Heart left ventricle (tissue), 16 donors: ENCODE measurements at regions of chr11 and their contacts with region 1.

Region 1: DNA sequence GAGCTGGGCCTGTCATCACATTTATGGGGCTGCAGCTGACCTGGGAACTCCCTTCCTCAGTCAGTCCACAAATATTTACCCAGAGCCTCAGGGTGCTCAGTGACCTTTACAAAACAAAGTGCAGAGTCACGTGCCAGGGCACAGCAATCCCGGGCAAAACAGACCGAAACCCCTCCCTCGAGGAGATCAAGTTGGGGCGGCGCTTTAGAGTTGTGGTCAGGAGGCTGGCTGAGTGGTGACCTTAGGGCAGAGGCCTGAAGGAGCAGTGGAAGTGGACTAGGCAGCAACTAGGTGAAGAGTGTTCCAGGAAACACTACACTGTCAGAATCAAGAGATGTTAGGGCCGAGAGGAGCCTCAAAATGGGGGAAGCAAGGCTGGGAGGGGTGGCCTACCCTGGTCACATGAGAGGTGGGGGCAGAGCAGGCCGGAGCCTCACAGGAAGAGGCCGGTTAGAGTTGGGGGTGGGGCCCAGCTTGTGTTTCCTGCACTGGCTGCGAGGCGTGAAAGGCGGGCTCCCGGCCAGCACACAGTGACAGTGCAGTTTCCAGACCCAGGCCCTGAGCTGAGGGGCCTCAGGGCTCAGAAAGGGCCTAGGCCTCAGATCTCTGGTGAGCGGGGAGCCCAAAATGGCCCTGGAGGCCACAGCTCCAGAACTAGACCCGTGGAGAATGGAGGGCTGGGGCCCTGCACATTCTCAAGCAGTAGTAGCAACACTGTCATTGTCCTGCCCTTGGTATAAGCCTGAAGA is 3.7 kb upstream of the NEAT1 start:
- DNase-seq: peak; percentile 98 to 99 (median 99)
- ATAC-seq: peak; percentile 41 to 59 (median 58)
- H3K4me3 ChIP-seq: peak overlapping the region; percentile 6 to 96 (median 82)
- H3K27ac ChIP-seq: peak overlapping the region; percentile 98 to 100 (median 100)
- H3K4me1 ChIP-seq: peaks cover 11 to 68% (median 55%) of the 10 kb centered on the region in 12 donors
- H3K27me3 ChIP-seq: no peaks in the 10 kb centered on the region
- CTCF ChIP-seq: no peak
- POLR2A ChIP-seq: peak in 1 of 2 donors; percentile 54

Region 2: DNA sequence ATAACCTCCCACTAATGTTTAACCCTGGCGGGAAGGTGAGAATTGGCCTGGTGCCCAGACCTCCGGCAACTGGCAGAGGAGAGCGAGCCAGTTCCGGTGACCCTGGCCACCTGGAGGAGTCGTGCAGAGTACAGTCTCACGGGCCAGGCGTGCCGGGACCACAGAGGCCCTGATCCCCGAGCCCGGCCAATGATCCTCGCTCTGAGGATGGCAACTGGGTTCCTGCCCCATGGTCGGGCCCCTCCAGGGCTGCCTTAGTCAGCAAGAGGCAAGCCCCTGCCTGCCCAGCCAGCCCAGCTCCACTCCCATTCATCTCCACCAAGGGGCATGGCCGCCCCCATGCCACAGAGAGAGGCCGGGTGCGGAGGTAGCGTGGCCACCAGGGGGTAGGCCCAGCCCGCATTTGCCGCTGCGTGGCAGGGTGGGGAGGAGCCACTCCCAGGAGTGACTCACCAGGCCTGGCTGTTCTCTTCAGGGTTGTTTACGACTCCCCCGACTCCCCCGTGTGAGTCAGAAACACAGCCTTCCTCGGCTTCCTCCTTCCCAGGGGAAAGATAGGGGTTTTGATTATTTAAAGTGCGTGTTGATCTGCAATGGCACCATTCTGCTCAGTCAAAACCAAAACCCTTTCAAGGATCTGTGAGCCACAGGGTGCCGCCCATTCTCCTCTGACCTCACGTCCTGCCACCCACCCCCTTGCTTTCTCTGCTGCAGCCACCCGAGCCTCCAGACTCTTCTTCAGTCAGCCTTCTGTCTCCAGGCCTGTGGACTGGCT is 36.7 kb before region 1 on chr11 and contains the start of gene SLC25A45:
- intact Hi-C with region 1: loop called in 6 of 10 experiments (anchors 2 to 5 kb)
- DNase-seq: peak; percentile 92 to 96 (median 95)
- ATAC-seq: peak; percentile 90 to 95 (median 92)
- H3K4me3 ChIP-seq: peak within 1 kb of the TSS; percentile 6 to 59 (median 50)
- H3K27ac ChIP-seq: peak within 1 kb of the TSS; percentile 90 to 99 (median 96)
- H3K4me1 ChIP-seq: peaks cover 12 to 71% (median 41%) of the 10 kb centered on the region in 12 donors
- H3K27me3 ChIP-seq: no peaks in the 10 kb centered on the region
- CTCF ChIP-seq: peak; percentile 80 to 97 (median 85)
- POLR2A ChIP-seq: peak in 1 of 2 donors; percentile 80
- total RNA-seq, gene SLC25A45: 3.8 to 11.6 (median 6.6) TPM

Region 3: DNA sequence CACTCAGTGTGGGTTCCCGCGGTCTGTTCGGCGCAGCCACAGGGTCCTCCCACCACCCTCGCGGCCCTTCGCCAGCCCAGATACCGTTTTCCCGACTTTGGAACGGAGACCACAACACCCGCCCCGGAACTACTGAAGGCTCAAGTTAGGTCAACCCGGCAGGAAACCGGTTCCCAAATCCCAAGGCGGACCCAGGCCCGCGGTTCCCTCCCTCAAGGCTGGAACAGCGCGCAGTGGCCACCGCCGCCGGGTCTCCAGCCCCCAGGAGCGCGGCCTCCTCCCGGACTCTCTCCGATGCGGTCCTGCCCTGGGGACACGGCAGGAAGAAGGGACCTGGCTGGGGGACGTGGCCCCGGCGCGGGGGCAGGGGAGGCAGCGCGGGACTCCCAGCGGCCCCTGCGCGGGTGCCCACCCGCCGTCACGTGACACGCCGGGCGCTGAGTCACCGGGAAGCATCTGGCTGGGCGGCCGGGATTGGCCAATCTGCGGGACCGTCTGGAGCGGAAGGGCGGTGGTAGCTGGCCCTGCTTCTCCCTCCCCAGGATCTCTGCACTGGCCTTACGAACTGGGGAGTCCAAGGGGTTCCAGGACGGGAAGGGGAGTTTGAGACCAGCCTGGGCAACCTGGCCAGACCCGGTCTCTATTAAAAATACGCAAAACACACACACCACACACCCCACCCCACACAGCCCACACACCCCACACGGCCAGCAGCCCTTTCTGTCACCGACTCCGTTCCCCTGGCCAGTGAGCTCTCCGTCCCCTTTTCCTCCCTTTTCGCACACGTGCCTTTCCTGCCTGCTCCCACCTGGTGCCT is 58.5 kb after region 1 on chr11:
- intact Hi-C with region 1: loop called in 2 of 10 experiments (anchors 1 to 2 kb)
- DNase-seq: peak; percentile 98 to 99 (median 99)
- ATAC-seq: peak; percentile 83 to 92 (median 88)
- H3K4me3 ChIP-seq: peak overlapping the region; percentile 59 to 94 (median 80)
- H3K27ac ChIP-seq: peak overlapping the region; percentile 96 to 100 (median 100)
- H3K4me1 ChIP-seq: peaks cover 8 to 68% (median 51%) of the 10 kb centered on the region in 12 donors
- H3K27me3 ChIP-seq: no peaks in the 10 kb centered on the region
- CTCF ChIP-seq: no peak
- POLR2A ChIP-seq: peak; percentile 59 to 94

Region 4: DNA sequence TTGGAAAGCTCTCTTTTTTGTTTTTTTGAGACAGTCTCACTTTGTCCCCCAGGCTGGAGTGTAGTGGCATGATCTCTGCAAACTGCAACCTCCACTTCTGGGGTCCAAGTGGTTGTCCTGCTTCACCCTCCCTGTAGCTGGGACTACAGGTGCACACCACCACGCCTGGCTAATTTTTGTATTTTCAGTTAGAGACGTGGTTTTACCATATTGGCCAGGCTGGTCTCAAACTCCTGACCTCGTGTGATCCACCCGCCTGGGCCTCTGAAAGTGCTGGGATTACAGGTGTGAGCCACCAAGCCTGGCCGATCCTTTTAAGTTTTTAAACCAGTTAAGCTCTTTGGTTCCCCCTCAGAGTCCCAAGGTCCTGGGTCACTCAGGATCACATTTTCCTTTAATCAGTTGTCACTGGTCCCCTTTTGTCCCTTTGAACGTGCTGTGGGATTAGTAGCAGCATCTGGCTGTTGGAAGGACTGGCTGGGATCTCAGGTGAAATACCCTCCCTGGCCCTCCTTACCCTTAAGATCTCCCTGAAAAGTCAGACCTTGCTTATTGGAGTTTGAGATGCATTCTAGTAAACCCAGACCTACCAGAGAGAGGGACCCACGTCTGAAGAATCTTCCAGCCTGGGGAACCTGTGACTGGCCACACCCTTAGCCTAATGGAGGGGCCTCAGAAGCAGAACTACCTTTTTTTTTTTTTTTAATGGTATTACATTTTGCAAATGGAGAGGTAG is 88.1 kb after region 1 on chr11:
- intact Hi-C with region 1: loop called (anchors 1 to 5 kb)
- DNase-seq: peak in 3 of 5 donors; percentile 35 to 39 (median 38)
- ATAC-seq: peak; percentile 21 to 50 (median 43)
- H3K4me3 ChIP-seq: peak overlapping the region in 9 of 12 donors; percentile 70 to 90 (median 82)
- H3K27ac ChIP-seq: peak overlapping the region; percentile 65 to 100 (median 98)
- H3K4me1 ChIP-seq: peaks cover 0 to 57% (median 26%) of the 10 kb centered on the region in 12 donors
- H3K27me3 ChIP-seq: no peaks in the 10 kb centered on the region
- CTCF ChIP-seq: no peak
- POLR2A ChIP-seq: peak in 1 of 2 donors; percentile 35